ENCODE measurements at regions of chr12 and their contacts with region 1.

Region 1: GRCh38 chr12:49776413-49776812 is 35.1 kb downstream of the TMBIM6 start:
- DNase-seq: peak in 8 of 9 donors; percentile 21 to 52 (median 36)
- ATAC-seq: peak; percentile 85
- H3K4me3 ChIP-seq: no peak overlapping the region
- H3K4me3 Mint-ChIP-seq: peak overlapping the region in 2 of 10 donors; percentile 12 to 27
- H3K27ac ChIP-seq: no peak overlapping the region
- H3K27ac Mint-ChIP-seq: peak overlapping the region in 2 of 9 donors; percentile 25 to 56
- H3K4me1 ChIP-seq: peaks cover 0 to 8% of the 10 kb centered on the region in 2 donors
- H3K4me1 Mint-ChIP-seq: peaks cover 10 to 17% (median 13%) of the 10 kb centered on the region in 7 donors
- H3K27me3 ChIP-seq: peaks cover 0 to 8% of the 10 kb centered on the region in 2 donors
- H3K27me3 Mint-ChIP-seq: peaks cover 6 to 27% (median 20%) of the 10 kb centered on the region in 5 donors

Region 2: DNA sequence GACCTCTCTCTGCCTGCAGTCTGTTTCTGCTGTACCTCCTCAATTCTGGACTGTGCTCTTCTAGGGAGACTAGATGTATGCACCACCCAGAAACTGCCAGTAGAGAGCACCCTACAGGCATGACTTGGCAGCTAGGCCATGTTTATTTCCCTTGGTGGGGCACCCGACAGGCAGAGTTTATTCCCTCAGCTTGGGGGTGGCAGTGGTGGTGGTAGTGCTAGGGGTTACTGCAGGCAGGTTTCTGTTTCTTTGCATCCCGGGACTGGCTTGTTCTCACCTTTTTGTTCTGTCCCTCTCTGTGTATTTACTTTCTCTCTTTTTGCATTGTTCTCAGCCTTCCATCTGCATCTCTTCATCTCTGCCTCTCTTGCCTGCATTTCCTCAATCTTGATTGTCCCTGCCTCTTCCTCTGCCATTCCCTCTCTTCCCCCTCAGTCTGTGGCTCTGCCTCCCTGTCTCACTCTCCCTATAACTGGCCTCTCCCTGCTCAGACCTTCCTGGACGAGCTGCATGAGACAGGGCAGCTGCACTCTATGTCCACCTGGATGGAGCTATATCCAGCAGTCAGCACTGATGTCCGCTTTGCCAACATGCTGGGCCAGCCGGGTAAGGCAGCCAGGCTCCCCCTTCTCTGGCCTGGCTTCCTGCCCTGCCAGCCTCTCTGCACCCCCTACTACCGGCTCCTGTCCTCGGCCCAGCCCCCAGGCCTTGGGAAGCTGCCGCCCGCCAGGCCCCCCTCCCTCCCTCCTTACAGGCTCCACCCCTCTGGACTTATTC is 139.2 kb before region 1 on chr12:
- CTCF ChIA-PET with region 1: interaction called, 14 read pairs
- POLR2A ChIA-PET with region 1: no interaction called
- intact Hi-C with region 1: loop called (anchors 1 to 2 kb)
- DNase-seq: peak in 8 of 9 donors; percentile 45 to 71 (median 61)
- ATAC-seq: peak; percentile 95
- H3K4me3 ChIP-seq: no peak overlapping the region
- H3K4me3 Mint-ChIP-seq: peak overlapping the region in 1 of 10 donors; percentile 20
- H3K27ac ChIP-seq: peak overlapping the region; percentile 38
- H3K27ac Mint-ChIP-seq: peak overlapping the region; percentile 13 to 90 (median 68)
- H3K4me1 ChIP-seq: peaks cover 6 to 11% of the 10 kb centered on the region in 2 donors
- H3K4me1 Mint-ChIP-seq: peaks cover 10 to 36% (median 26%) of the 10 kb centered on the region in 7 donors
- H3K27me3 ChIP-seq: no peaks in the 10 kb centered on the region
- H3K27me3 Mint-ChIP-seq: no peaks in the 10 kb centered on the region

Region 3: GRCh38 chr12:49720214-49720613 is 56.2 kb before region 1 on chr12:
- CTCF ChIA-PET with region 1: interaction called, 6 read pairs
- POLR2A ChIA-PET with region 1: no interaction called
- intact Hi-C with region 1: loop called in 1 of 2 experiments (anchors 1 kb)
- DNase-seq: no peak
- ATAC-seq: peak; percentile 44
- H3K4me3 ChIP-seq: no peak overlapping the region
- H3K4me3 Mint-ChIP-seq: no peak overlapping the region
- H3K27ac ChIP-seq: no peak overlapping the region
- H3K27ac Mint-ChIP-seq: no peak overlapping the region
- H3K4me1 ChIP-seq: no peaks in the 10 kb centered on the region
- H3K4me1 Mint-ChIP-seq: no peaks in the 10 kb centered on the region
- H3K27me3 ChIP-seq: no peaks in the 10 kb centered on the region
- H3K27me3 Mint-ChIP-seq: peaks cover 0 to 45% (median 9%) of the 10 kb centered on the region in 5 donors

Region 4: DNA sequence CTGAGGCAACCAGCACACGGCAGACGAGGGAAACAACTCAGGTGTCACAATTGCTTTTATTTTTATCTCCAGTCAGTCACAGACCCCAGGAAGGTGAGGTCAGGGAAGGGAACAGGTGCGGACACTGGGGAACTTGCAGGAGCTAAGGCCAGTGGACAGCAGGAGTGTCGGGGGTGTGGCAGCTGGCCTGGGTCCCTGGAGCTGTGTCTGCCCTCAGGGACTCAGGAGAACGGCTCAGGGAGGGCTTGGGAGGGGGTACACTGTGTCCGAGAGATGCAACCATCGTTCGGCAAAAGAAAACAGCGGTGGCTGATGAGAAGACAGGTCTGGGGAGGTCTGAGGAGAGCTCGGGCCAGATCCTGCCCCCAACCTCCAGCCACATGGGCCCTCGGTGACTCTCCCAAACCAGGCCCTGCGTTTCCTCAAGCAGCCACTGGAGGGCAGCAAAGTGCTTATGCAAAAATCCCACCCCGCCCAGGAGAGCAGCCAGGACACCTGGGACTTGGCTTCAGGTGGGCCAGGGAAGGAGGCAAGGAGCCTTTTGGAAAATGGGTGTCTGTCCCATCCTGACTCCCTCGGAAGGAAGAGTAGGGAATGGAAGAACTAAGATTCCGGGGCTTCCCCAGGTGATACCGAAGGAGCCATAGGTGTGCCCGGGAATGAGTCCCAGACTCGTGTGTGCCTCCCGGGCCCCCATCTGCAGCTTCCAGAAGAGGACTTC is 90.6 kb after region 1 on chr12:
- CTCF ChIA-PET with region 1: interaction called, 6 read pairs
- POLR2A ChIA-PET with region 1: no interaction called
- intact Hi-C with region 1: loop called (anchors 1 kb)
- DNase-seq: peak; percentile 46 to 80 (median 62)
- ATAC-seq: peak; percentile 86
- H3K4me3 ChIP-seq: no peak overlapping the region
- H3K4me3 Mint-ChIP-seq: no peak overlapping the region
- H3K27ac ChIP-seq: no peak overlapping the region
- H3K27ac Mint-ChIP-seq: no peak overlapping the region
- H3K4me1 ChIP-seq: no peaks in the 10 kb centered on the region
- H3K4me1 Mint-ChIP-seq: peaks cover 0 to 6% (median 0%) of the 10 kb centered on the region in 7 donors
- H3K27me3 ChIP-seq: no peaks in the 10 kb centered on the region
- H3K27me3 Mint-ChIP-seq: peaks cover 0 to 4% (median 0%) of the 10 kb centered on the region in 5 donors

Region 5: DNA sequence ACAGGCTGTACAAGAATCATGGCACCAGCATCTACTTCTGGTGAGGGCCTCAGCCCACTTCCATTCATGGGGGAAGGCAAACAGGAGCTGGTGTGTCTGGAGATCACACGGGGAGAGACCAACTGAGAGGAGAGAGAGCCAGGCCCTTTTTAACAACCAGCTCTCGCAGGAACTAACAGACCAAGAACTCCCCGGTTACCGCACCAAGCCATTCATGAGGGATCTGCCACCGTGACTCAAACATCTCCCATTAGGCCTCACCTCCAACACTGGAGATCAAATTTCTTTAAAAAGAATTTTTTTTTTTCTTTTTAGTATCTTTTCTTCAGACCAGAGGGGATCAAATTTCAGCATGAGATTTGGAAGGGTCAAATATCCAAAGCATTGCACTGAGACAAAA is 157.4 kb after region 1 on chr12:
- CTCF ChIA-PET with region 1: no interaction called
- POLR2A ChIA-PET with region 1: no interaction called
- intact Hi-C with region 1: no loop called
- DNase-seq: no peak
- ATAC-seq: no peak
- H3K4me3 ChIP-seq: no peak overlapping the region
- H3K4me3 Mint-ChIP-seq: no peak overlapping the region
- H3K27ac ChIP-seq: no peak overlapping the region
- H3K27ac Mint-ChIP-seq: no peak overlapping the region
- H3K4me1 ChIP-seq: no peaks in the 10 kb centered on the region
- H3K4me1 Mint-ChIP-seq: no peaks in the 10 kb centered on the region
- H3K27me3 ChIP-seq: no peaks in the 10 kb centered on the region
- H3K27me3 Mint-ChIP-seq: peaks cover 0 to 12% (median 5%) of the 10 kb centered on the region in 5 donors

Region 6: DNA sequence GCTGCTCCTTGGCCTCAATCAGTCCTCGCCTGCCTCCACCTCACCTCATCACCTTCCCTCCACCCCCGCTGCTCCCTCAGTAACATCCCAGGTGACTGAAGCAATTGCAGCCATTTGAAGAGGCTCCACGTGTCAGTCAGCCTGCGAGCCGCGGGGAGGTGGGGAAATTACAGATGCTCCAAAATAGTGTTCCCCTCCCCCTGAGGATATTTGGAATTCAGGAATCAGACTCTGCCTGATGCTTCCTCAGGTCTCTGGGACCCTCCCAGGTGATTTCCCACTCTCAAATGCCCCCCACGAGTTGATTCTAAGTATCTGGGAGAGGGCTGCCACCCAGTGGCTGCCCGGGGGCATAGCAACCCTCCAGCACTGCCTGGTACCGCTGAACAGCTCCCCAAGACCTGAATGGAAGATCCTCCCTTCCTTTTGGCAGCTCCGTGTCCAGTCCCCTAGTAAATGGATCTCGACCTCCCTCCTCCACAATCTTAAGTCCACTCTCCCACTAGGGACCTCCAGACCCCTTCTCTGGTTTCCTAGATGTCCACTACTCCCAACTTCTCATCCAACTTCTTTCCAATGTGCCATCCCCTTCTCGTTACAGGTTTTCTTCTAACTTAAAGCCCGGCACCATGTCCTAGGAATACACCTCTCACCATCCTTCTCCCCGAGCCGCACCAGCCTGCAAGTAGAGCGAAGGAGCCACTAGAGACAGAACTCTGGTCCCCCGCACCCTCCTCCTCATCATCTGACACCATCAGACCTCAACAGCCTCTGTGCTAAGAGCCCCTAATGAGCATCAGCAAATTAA is 279.6 kb after region 1 on chr12:
- CTCF ChIA-PET with region 1: no interaction called
- POLR2A ChIA-PET with region 1: no interaction called
- intact Hi-C with region 1: loop called (anchors 5 kb)
- DNase-seq: peak; percentile 41 to 64 (median 56)
- ATAC-seq: peak; percentile 79
- H3K4me3 ChIP-seq: peak overlapping the region; percentile 42
- H3K4me3 Mint-ChIP-seq: peak overlapping the region; percentile 66 to 96 (median 92)
- H3K27ac ChIP-seq: no peak overlapping the region
- H3K27ac Mint-ChIP-seq: peak overlapping the region in 2 of 9 donors; percentile 46 to 57
- H3K4me1 ChIP-seq: peaks cover 7 to 31% of the 10 kb centered on the region in 2 donors
- H3K4me1 Mint-ChIP-seq: peaks cover 17 to 48% (median 41%) of the 10 kb centered on the region in 7 donors
- H3K27me3 ChIP-seq: peaks cover 0 to 9% of the 10 kb centered on the region in 2 donors
- H3K27me3 Mint-ChIP-seq: peaks cover 38 to 56% (median 48%) of the 10 kb centered on the region in 5 donors